Psoas muscle (tissue), 8 donors: ENCODE measurements at regions of chr5 and their contacts with region 1.

Region 1: DNA sequence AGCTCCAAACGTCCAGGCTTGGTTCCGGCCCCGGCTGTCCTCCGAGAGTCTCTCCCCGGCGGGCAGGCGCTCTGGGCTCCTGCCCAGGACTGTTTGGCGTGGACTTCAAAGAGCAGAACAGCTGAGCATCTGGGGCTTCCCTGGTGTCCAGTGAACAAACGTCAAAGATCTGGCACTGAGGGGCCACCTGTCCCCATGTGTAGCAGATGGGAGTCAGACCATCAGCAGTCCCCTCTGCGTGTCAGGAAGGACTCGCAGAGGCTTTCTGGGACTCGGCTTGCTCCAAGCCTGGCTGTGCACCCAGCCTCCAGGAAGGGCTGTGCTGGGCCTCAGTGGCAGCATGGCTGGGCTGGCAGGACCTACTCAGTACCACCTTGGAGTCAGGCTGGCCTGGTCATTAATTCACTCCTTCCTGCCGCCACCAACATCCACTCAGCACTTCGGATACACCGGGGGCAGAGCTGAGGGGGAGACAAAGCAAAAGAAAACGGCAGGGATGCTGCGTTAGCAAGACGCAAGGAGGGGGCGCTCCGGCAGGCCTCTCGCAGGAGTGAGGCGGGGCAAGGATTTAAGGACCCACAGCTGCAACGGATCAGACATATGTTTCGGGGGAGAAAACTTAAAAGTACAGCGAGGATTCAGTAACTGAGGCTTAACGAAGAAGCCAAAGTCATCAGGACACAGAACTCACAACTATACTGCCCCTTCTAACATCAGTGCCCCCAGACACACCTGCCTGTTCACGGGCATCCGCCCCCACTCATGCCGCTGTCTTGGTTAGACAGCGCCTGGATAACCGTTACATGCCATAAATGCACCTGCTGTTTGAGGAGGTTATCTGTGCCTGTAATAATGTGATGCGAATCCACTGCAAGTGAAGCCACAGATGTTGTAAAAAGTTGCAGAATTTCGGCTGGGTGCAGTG is 164.5 kb upstream of the PHYKPL start:
- DNase-seq: peak; percentile 76 to 89
- ATAC-seq: peak; percentile 97 to 99 (median 98)
- H3K4me3 ChIP-seq: peak overlapping the region; percentile 22
- H3K27ac ChIP-seq: peak overlapping the region; percentile 74
- H3K4me1 ChIP-seq: peaks cover 4% of the 10 kb centered on the region
- H3K27me3 ChIP-seq: peaks cover 0 to 19% (median 0%) of the 10 kb centered on the region in 3 donors
- CTCF ChIP-seq: no peak

Region 2: GRCh38 chr5:178331399-178331996 is 65.6 kb before region 1 on chr5:
- intact Hi-C with region 1: loop called in 1 of 2 experiments (anchors 5 kb)
- DNase-seq: peak; percentile 82 to 94
- ATAC-seq: peak; percentile 88 to 91 (median 89)
- H3K4me3 ChIP-seq: no peak overlapping the region
- H3K27ac ChIP-seq: peak overlapping the region; percentile 87
- H3K4me1 ChIP-seq: peaks cover 16% of the 10 kb centered on the region
- H3K27me3 ChIP-seq: peaks cover 0 to 2% (median 0%) of the 10 kb centered on the region in 3 donors
- CTCF ChIP-seq: no peak